Panc1 (cell line): ENCODE measurements at regions of chr6 and their contacts with region 1.

Region 1: GRCh38 chr6:112579601-112580000 is 232.5 kb downstream of the RFPL4B start:
- DNase-seq: no peak
- ATAC-seq: no peak
- H3K4me3 ChIP-seq: no peak overlapping the region
- H3K27ac ChIP-seq: no peak overlapping the region
- H3K4me1 ChIP-seq: no peaks in the 10 kb centered on the region
- H3K27me3 ChIP-seq: no peaks in the 10 kb centered on the region
- CTCF ChIP-seq: no peak

Region 2: GRCh38 chr6:112357791-112358190 is 221.8 kb before region 1 on chr6:
- CTCF ChIA-PET with region 1: no interaction called
- POLR2A ChIA-PET with region 1: no interaction called
- in situ Hi-C with region 1: no loop called
- intact Hi-C with region 1: no loop called
- DNase-seq: no peak
- ATAC-seq: no peak
- H3K4me3 ChIP-seq: no peak overlapping the region
- H3K27ac ChIP-seq: no peak overlapping the region
- H3K4me1 ChIP-seq: no peaks in the 10 kb centered on the region
- H3K27me3 ChIP-seq: no peaks in the 10 kb centered on the region
- CTCF ChIP-seq: no peak

Region 3: GRCh38 chr6:112560651-112561050 is 18.9 kb before region 1 on chr6:
- CTCF ChIA-PET with region 1: no interaction called
- POLR2A ChIA-PET with region 1: interaction called, 15 read pairs
- in situ Hi-C with region 1: no loop called
- intact Hi-C with region 1: no loop called
- DNase-seq: no peak
- ATAC-seq: no peak
- H3K4me3 ChIP-seq: no peak overlapping the region
- H3K27ac ChIP-seq: no peak overlapping the region
- H3K4me1 ChIP-seq: no peaks in the 10 kb centered on the region
- H3K27me3 ChIP-seq: no peaks in the 10 kb centered on the region
- CTCF ChIP-seq: peak; percentile 25